ENCODE measurements at regions of chr14 and their contacts with region 1.

Region 1: GRCh38 chr14:92712654-92713051 is 35.8 kb downstream of the LGMN start:
- DNase-seq: no peak
- ATAC-seq: no peak
- H3K4me3 ChIP-seq: no peak overlapping the region
- H3K27ac ChIP-seq: no peak overlapping the region
- H3K4me1 ChIP-seq: no peaks in the 10 kb centered on the region
- H3K27me3 ChIP-seq: no peaks in the 10 kb centered on the region
- CTCF ChIP-seq: no peak
- POLR2A ChIP-seq: no peak

Region 2: DNA sequence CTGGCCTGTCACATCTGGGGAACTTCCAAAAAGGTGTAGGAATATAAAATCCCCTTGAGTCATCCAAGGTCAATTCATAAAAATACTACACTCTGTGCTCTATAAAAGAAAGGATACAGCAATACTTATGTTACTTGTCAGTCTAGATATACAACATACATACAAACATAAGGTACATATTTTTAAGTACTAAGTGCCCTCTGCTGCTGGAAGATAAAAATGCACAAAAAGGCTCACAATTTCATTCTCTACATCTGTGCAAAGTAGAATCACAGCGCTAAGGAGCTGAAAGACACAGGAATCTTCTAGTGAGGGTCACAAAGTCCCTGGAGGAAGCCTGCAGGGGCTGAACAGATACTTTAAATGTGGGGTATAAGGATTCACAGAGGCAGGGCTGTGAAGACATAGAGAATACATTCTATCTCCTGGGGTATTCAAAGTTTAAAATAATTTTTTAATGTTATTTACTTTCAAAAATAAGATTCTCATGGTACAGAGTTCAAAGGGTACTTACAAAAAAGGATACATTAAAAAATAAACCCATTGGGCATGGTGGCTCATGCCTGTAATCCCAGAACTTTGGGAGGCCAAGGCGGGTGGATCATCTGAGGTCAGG is 71.3 kb after region 1 on chr14:
- intact Hi-C with region 1: loop called (anchors 5 kb)
- DNase-seq: peak; percentile 31 to 76 (median 40)
- ATAC-seq: peak; percentile 77
- H3K4me3 ChIP-seq: no peak overlapping the region
- H3K27ac ChIP-seq: no peak overlapping the region
- H3K4me1 ChIP-seq: peaks cover 18% of the 10 kb centered on the region
- H3K27me3 ChIP-seq: no peaks in the 10 kb centered on the region
- CTCF ChIP-seq: peak in 6 of 7 experiments; percentile 30 to 77 (median 72)
- POLR2A ChIP-seq: no peak